ENCODE measurements at regions of chr5 and their contacts with region 1.

Region 1: DNA sequence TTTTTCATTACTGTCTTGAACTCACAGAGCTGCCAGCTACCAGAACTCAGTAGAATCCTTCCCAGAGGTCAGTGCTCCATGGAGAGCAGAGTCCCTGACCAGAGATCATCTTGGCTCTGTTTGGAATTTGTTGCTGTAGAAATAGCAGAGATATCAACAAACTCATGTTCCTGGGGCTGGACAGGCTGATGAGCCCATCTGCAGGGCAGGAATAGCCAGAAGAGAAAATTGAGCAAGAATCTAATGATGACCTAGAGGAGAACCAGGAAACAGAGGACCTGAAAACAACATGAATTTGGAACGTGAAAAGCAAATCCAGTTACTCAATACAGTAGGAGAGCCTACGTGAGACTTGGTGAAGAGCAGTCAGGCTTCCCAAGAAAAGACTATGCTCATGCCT is 437.8 kb downstream of the PLK2 start:
- DNase-seq: no peak
- ATAC-seq: no peak
- H3K4me3 ChIP-seq: no peak overlapping the region
- H3K4me3 Mint-ChIP-seq: no peak overlapping the region
- H3K27ac ChIP-seq: no peak overlapping the region
- H3K27ac Mint-ChIP-seq: no peak overlapping the region
- H3K4me1 ChIP-seq: no peaks in the 10 kb centered on the region
- H3K4me1 Mint-ChIP-seq: no peaks in the 10 kb centered on the region
- H3K27me3 ChIP-seq: no peaks in the 10 kb centered on the region
- H3K27me3 Mint-ChIP-seq: peaks cover 0 to 10% (median 2%) of the 10 kb centered on the region in 5 donors

Region 2: DNA sequence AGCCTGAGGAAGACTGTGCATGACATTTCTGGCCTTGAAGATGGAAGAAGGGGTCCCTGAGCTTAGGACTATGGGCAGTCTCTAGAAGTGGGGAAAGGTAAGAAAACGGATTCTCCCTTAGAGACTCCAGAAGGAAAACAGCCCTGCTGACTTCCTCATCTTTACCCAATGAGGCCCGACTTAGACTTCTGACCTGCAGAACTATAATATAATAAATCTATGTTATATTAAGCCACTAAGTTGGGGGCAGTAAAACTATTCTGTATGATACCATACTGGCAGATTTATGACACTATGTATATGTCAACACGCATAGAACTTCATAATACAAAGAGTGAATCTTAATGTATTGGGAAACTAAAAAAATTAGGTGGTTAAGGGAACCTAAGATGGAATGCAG is 15.8 kb after region 1 on chr5:
- CTCF ChIA-PET with region 1: no interaction called
- POLR2A ChIA-PET with region 1: no interaction called
- intact Hi-C with region 1: loop called (anchors 1 kb)
- DNase-seq: no peak
- ATAC-seq: no peak
- H3K4me3 ChIP-seq: no peak overlapping the region
- H3K4me3 Mint-ChIP-seq: no peak overlapping the region
- H3K27ac ChIP-seq: no peak overlapping the region
- H3K27ac Mint-ChIP-seq: no peak overlapping the region
- H3K4me1 ChIP-seq: no peaks in the 10 kb centered on the region
- H3K4me1 Mint-ChIP-seq: peaks cover 0 to 2% (median 0%) of the 10 kb centered on the region in 7 donors
- H3K27me3 ChIP-seq: no peaks in the 10 kb centered on the region
- H3K27me3 Mint-ChIP-seq: peaks cover 0 to 9% (median 0%) of the 10 kb centered on the region in 5 donors

Measured in naive thymus-derived CD4-positive, alpha-beta T cell (primary cell).